Right ventricle myocardium inferior (tissue), 1 donor: ENCODE measurements at regions of chr1 and their contacts with region 1.

Region 1: GRCh38 chr1:206912445-206913095 is 9.2 kb downstream of the FCMR start:
- DNase-seq: no peak
- ATAC-seq: peak; percentile 66

Region 2: GRCh38 chr1:206489980-206490770 is 422.4 kb before region 1 on chr1:
- intact Hi-C with region 1: loop called (anchors 5 kb)
- DNase-seq: peak; percentile 88
- ATAC-seq: peak; percentile 89

Region 3: GRCh38 chr1:206612129-206612876 is 300.3 kb before region 1 on chr1 and contains the start of gene EIF2D:
- intact Hi-C with region 1: loop called (anchors 5 kb)
- DNase-seq: peak; percentile 97
- ATAC-seq: peak; percentile 100
- total RNA-seq, gene EIF2D: 26.0 TPM

Region 4: GRCh38 chr1:206635080-206635977 is 277.2 kb before region 1 on chr1 and contains the start of gene DYRK3:
- intact Hi-C with region 1: loop called (anchors 2 kb)
- DNase-seq: peak; percentile 96
- ATAC-seq: peak; percentile 99
- total RNA-seq, gene DYRK3: 21.9 TPM

Region 5: GRCh38 chr1:206734499-206735142 is 177.9 kb before region 1 on chr1:
- intact Hi-C with region 1: loop called (anchors 5 kb)
- DNase-seq: no peak
- ATAC-seq: no peak

Region 6: DNA sequence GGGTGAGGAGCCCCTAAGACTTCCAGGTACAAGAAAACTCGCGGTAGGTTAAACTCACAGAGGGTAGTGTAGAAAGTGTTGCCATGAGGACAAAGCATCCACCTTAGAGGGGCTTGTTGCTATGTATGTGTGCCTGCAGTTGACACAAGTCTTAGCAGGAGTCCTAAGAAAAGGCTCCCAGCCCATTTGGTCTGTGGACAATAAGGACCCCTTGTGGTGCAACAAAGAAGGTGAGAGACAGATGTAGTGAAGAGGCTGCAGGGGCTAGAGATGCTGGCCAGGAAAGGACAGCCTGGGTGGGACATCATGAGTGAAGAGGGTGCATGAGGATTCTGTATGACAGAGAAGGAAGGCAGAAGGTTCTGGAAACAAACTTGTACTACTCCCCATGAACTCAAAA is 104.0 kb before region 1 on chr1:
- intact Hi-C with region 1: loop called (anchors 5 kb)
- DNase-seq: no peak
- ATAC-seq: peak; percentile 68

Region 7: DNA sequence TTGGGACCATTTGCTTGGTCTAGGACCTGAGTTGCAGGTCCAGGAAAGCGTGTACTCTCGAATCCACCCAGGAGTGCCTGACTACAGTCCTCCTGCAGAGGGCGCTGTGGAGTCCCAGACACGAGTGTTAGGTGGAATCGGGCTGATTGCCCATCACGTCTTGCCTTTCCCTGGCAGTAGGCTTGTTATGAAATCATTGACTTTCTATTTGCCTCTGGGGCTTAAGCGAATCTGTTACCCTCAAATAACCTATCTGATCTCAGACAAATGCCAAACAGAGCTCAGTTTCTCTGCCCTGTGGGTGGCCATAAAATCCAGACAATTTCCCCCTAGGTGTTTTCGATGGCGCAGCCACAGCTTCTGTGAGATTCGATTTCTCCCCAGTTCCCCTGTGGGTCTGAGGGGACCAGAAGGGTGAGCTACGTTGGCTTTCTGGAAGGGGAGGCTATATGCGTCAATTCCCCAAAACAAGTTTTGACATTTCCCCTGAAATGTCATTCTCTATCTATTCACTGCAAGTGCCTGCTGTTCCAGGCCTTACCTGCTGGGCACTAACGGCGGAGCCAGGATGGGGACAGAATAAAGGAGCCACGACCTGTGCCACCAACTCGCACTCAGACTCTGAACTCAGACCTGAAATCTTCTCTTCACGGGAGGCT is 47.4 kb before region 1 on chr1 and contains the start of gene IL20:
- intact Hi-C with region 1: loop called (anchors 1 kb)
- DNase-seq: peak; percentile 83
- ATAC-seq: peak; percentile 68
- total RNA-seq, gene IL20: not detected

Region 8: DNA sequence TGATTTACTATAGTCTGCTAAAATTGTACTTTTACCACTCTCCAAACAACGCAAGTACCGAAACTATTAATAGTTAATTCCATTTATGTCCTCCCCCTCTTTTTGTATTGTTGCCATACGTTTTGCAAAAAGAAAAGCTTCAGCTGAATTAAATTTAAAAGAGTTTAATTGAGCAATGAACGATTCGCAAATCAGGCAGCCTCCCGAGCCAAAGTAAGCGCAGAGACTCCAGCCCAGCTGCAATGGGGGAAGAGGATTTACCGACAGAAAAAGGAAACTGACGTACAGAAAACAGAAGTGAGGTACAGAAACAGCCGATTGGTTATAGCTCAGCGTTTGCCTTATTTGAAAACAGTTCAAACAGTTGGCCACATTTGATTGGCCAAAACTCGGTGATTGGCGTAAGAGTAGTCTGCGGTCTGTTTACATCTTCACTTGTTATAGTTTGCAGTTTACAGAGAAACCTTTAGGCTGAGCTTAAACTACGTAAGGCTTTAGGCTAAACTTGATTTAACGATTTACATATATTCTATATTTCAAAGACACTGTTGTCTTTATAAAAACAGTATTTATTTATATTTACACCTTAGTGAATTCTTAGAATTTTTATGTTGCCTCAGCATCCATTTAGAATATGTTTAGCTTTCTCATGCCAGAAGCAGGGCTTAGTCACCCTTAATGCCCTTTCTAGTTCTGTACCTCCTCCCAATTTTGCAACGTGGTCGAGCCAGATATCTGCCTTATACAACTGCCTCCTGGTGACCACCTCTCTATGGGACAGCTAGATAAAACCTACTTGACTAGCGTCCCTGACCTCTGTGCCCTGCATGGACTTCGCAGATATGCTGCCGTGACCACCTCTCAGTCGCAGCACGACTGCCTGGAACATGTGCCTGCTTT is 607.2 kb after region 1 on chr1:
- intact Hi-C with region 1: no loop called
- DNase-seq: no peak
- ATAC-seq: no peak